CD8-positive, alpha-beta T cell (primary cell): ENCODE measurements at regions of chr16 and their contacts with region 1.

Region 1: DNA sequence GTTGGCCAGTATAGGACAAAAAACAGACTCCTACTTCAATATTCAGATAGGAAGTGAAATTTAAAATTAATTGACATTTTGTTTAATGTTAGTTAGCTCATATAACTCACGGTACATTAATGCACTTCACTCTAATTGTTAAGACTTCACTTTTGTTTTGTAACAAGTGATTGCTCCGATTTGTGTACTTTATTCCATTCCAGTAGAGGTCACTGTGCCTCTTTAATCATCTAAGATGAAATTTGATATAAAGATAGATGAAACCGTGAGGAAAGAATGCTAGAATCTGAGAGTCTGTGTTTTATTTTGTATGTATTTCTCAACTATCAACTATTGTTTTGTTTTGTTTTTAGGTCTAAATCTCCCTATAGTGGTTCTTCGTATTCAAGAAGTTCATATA is 29.0 kb downstream of the RBBP6 start:
- DNase-seq: no peak
- ATAC-seq: no peak
- H3K4me3 ChIP-seq: no peak overlapping the region
- H3K4me3 Mint-ChIP-seq: no peak overlapping the region
- H3K27ac ChIP-seq: no peak overlapping the region
- H3K27ac Mint-ChIP-seq: no peak overlapping the region
- H3K4me1 ChIP-seq: no peaks in the 10 kb centered on the region
- H3K4me1 Mint-ChIP-seq: no peaks in the 10 kb centered on the region
- H3K27me3 ChIP-seq: no peaks in the 10 kb centered on the region
- H3K27me3 Mint-ChIP-seq: no peaks in the 10 kb centered on the region
- CTCF ChIP-seq: no peak

Region 2: GRCh38 chr16:24800586-24800985 is 232.2 kb after region 1 on chr16:
- CTCF ChIA-PET with region 1: no interaction called
- POLR2A ChIA-PET with region 1: no interaction called
- intact Hi-C with region 1: loop called in 1 of 2 experiments (anchors 10 kb)
- DNase-seq: no peak
- ATAC-seq: no peak
- H3K4me3 ChIP-seq: no peak overlapping the region
- H3K4me3 Mint-ChIP-seq: no peak overlapping the region
- H3K27ac ChIP-seq: no peak overlapping the region
- H3K27ac Mint-ChIP-seq: no peak overlapping the region
- H3K4me1 ChIP-seq: no peaks in the 10 kb centered on the region
- H3K4me1 Mint-ChIP-seq: no peaks in the 10 kb centered on the region
- H3K27me3 ChIP-seq: no peaks in the 10 kb centered on the region
- H3K27me3 Mint-ChIP-seq: no peaks in the 10 kb centered on the region
- CTCF ChIP-seq: no peak

Region 3: GRCh38 chr16:24939234-24939633 is 370.8 kb after region 1 on chr16:
- CTCF ChIA-PET with region 1: no interaction called
- POLR2A ChIA-PET with region 1: no interaction called
- intact Hi-C with region 1: no loop called
- DNase-seq: peak in 1 of 9 experiments; percentile 13
- ATAC-seq: no peak
- H3K4me3 ChIP-seq: no peak overlapping the region
- H3K4me3 Mint-ChIP-seq: no peak overlapping the region
- H3K27ac ChIP-seq: no peak overlapping the region
- H3K27ac Mint-ChIP-seq: no peak overlapping the region
- H3K4me1 ChIP-seq: no peaks in the 10 kb centered on the region
- H3K4me1 Mint-ChIP-seq: no peaks in the 10 kb centered on the region
- H3K27me3 ChIP-seq: no peaks in the 10 kb centered on the region
- H3K27me3 Mint-ChIP-seq: no peaks in the 10 kb centered on the region
- CTCF ChIP-seq: no peak